Mammary epithelial cell (primary cell): ENCODE measurements at regions of chr1 and their contacts with region 1.

Region 1: GRCh38 chr1:26035959-26036755 is 9.8 kb downstream of the SLC30A2 start:
- DNase-seq: peak; percentile 60
- H3K4me3 ChIP-seq: peak overlapping the region; percentile 75 to 91 (median 90)
- H3K27ac ChIP-seq: no peak overlapping the region
- H3K4me1 ChIP-seq: peaks cover 20% of the 10 kb centered on the region
- H3K27me3 ChIP-seq: no peaks in the 10 kb centered on the region
- CTCF ChIP-seq: peak; percentile 88 to 97

Region 2: DNA sequence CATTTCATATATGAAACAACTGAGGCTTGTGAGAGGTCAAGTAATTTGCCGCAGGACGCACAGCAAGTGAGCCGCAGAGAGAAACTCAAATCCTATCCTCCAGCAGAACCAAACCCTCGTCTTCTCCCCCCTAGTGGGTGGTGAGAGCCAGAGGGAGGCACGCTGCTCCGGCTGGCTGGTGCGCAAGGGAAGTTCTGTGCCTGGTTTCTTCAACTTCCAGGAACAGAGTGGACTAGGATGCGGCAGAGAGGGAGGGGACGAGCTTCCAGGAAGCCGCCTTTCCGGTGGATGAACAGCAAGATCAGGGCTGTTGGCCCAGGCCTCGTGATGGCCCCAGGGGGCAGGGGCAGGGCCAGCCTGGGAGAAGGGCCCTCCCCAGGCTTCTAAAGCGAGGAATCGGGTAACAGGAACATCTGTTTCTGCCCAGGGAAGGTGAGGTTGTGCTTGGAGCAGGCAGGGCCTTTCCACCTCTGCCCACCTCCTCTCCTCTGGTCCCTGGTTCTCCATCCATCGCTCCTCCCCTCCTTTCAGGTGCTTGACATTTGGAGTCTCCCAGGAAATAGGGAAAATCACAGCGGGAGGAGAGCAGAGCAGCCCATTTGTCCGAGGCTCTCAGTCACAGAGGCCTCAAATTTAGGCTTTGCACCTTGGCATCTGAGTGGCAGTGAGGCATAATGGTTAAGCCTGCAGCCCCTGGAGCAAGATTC is 58.7 kb after region 1 on chr1:
- CTCF ChIA-PET with region 1: no interaction called
- dilution Hi-C with region 1: loop called (anchors 5 kb)
- in situ Hi-C with region 1: no loop called
- intact Hi-C with region 1: loop called (anchors 1 kb)
- DNase-seq: no peak
- H3K4me3 ChIP-seq: no peak overlapping the region
- H3K27ac ChIP-seq: no peak overlapping the region
- H3K4me1 ChIP-seq: peaks cover 23% of the 10 kb centered on the region
- H3K27me3 ChIP-seq: no peaks in the 10 kb centered on the region
- CTCF ChIP-seq: peak in 1 of 2 donors; percentile 2

Region 3: GRCh38 chr1:26145041-26145959 is 109.1 kb after region 1 on chr1:
- CTCF ChIA-PET with region 1: interaction called, 3 read pairs
- dilution Hi-C with region 1: no loop called
- in situ Hi-C with region 1: loop called (anchors 10 to 25 kb)
- intact Hi-C with region 1: loop called (anchors 1 kb)
- DNase-seq: peak; percentile 62
- H3K4me3 ChIP-seq: no peak overlapping the region
- H3K27ac ChIP-seq: no peak overlapping the region
- H3K4me1 ChIP-seq: no peaks in the 10 kb centered on the region
- H3K27me3 ChIP-seq: no peaks in the 10 kb centered on the region
- CTCF ChIP-seq: peak; percentile 59 to 77

Region 4: GRCh38 chr1:26169669-26170471 is 133.7 kb after region 1 on chr1 and contains the start of gene ZNF593:
- CTCF ChIA-PET with region 1: interaction called, 7 read pairs
- dilution Hi-C with region 1: no loop called
- in situ Hi-C with region 1: loop called in 1 of 2 experiments (anchors 25 kb)
- intact Hi-C with region 1: no loop called
- DNase-seq: peak; percentile 81
- H3K4me3 ChIP-seq: peak within 1 kb of the TSS; percentile 73 to 84 (median 76)
- H3K27ac ChIP-seq: peak within 1 kb of the TSS; percentile 75
- H3K4me1 ChIP-seq: peaks cover 9% of the 10 kb centered on the region
- H3K27me3 ChIP-seq: no peaks in the 10 kb centered on the region
- CTCF ChIP-seq: peak; percentile 83 to 94
- total RNA-seq, gene ZNF593: 31.5 to 41.5 TPM

Region 5: DNA sequence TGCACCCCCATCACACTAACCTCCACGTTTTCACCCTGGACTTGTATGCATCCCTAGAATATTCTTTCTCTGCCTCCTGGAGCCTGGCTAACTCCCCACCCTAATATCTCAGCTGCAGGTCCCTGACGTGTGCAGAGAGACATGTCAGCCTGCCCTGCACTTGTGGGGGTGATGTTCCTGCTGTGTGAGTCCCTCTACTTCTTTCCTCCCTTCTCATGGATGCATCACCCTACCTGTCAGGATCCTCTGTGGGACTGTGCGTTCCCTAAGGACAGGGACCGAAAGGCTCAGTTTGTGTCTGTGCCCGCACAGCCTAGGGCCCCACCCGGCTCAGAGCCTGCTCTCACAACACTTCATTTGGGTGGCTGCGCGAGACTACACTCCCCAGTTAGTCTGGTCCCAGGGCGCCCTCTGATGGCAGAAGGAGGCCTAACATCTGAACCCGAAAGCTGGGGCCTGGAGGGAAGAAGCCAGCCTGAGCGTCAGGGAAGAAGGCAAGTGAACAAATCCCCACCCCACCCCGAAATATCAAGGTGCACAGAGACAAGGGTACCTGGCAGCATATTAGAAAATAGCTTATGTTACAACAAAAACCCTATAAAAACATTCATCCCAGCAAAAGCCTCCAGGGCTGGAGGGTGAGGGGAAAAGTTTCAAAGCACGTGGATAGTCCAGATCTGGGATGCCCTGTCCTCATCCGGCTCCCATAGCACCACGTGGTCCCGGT is 285.3 kb after region 1 on chr1:
- CTCF ChIA-PET with region 1: no interaction called
- dilution Hi-C with region 1: no loop called
- in situ Hi-C with region 1: no loop called
- intact Hi-C with region 1: loop called (anchors 2 kb)
- DNase-seq: peak; percentile 76
- H3K4me3 ChIP-seq: no peak overlapping the region
- H3K27ac ChIP-seq: no peak overlapping the region
- H3K4me1 ChIP-seq: peaks cover 9% of the 10 kb centered on the region
- H3K27me3 ChIP-seq: no peaks in the 10 kb centered on the region
- CTCF ChIP-seq: peak; percentile 78 to 91